ENCODE measurements at regions of chr3 and their contacts with region 1.

Region 1: DNA sequence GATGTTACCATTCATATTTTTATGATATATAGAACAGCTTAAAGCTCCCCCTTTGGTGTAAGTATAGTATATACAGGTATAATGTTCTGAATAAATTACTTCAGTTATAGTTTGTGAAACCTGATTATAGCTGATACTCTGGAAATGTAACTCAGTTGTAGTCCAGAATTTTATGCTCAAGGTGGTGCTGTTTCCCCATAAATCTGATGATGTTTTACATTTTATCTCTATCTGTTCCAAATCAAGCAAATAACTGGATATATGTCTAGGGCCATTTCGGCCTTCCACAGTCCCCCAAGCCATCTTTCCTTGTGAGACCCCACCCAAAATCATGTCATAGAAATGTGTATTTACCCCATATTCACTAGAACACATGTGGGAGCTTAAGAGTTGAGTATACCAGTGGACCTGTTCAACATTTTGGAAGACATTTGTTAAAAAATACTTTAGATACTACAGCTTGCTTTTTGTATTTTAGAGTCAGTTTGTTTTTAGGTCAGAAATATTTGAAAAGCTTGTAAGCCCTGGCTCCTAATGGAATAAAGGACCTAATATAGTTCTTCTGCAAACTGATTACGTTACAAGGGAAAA is 107.1 kb downstream of the ATG7 start:
- DNase-seq: no peak
- ATAC-seq: no peak
- H3K4me3 Mint-ChIP-seq: no peak overlapping the region
- H3K27ac Mint-ChIP-seq: no peak overlapping the region
- H3K4me1 Mint-ChIP-seq: peaks cover 21% of the 10 kb centered on the region
- H3K27me3 Mint-ChIP-seq: no peaks in the 10 kb centered on the region
- CTCF ChIP-seq: peak; percentile 57; the same call in 1 of the 2 replicates

Region 2: GRCh38 chr3:11288786-11289682 is 90.3 kb before region 1 on chr3:
- CTCF ChIA-PET with region 1: no interaction called
- POLR2A ChIA-PET with region 1: no interaction called
- DNase-seq: no peak
- ATAC-seq: no peak
- H3K4me3 Mint-ChIP-seq: no peak overlapping the region
- H3K27ac Mint-ChIP-seq: no peak overlapping the region
- H3K4me1 Mint-ChIP-seq: no peaks in the 10 kb centered on the region
- H3K27me3 Mint-ChIP-seq: no peaks in the 10 kb centered on the region
- CTCF ChIP-seq: no peak

Region 3: GRCh38 chr3:11390411-11391131 is 11.2 kb after region 1 on chr3:
- CTCF ChIA-PET with region 1: interaction called, 12 read pairs
- POLR2A ChIA-PET with region 1: no interaction called
- DNase-seq: no peak
- ATAC-seq: no peak
- H3K4me3 Mint-ChIP-seq: no peak overlapping the region
- H3K27ac Mint-ChIP-seq: no peak overlapping the region
- H3K4me1 Mint-ChIP-seq: peaks cover 22% of the 10 kb centered on the region
- H3K27me3 Mint-ChIP-seq: no peaks in the 10 kb centered on the region
- CTCF ChIP-seq: no peak

Region 4: DNA sequence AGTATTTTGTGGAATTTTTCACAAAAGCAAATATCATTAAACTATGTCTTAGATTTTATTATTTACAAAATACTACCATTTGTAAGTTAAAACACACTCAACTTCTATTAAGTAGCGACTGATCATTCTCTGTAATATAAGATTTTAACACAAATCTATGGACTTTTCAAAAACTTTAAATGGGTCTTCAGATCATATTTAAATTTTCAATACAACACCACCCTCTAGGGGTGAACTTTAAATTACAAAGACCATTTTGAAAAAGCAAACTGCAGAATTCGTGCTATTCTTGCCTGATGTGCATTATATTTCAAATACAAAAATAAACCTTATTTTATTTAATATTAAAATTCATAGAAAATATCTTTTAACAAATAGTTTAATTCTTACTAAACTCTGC is 272.6 kb after region 1 on chr3:
- CTCF ChIA-PET with region 1: interaction called, 21 read pairs
- POLR2A ChIA-PET with region 1: no interaction called
- DNase-seq: no peak
- ATAC-seq: no peak
- H3K4me3 Mint-ChIP-seq: no peak overlapping the region
- H3K27ac Mint-ChIP-seq: no peak overlapping the region
- H3K4me1 Mint-ChIP-seq: peaks cover 48% of the 10 kb centered on the region
- H3K27me3 Mint-ChIP-seq: no peaks in the 10 kb centered on the region
- CTCF ChIP-seq: no peak